Vagina (tissue), 2 donors: ENCODE measurements at regions of chr11 and their contacts with region 1.

Region 1: GRCh38 chr11:61384271-61385242 is 7.8 kb upstream of the TMEM216 start:
- DNase-seq: no peak
- H3K4me3 ChIP-seq: no peak overlapping the region
- H3K27ac ChIP-seq: no peak overlapping the region
- H3K4me1 ChIP-seq: peaks cover 4% of the 10 kb centered on the region
- H3K27me3 ChIP-seq: no peaks in the 10 kb centered on the region
- CTCF ChIP-seq: no peak
- POLR2A ChIP-seq: no peak

Region 2: DNA sequence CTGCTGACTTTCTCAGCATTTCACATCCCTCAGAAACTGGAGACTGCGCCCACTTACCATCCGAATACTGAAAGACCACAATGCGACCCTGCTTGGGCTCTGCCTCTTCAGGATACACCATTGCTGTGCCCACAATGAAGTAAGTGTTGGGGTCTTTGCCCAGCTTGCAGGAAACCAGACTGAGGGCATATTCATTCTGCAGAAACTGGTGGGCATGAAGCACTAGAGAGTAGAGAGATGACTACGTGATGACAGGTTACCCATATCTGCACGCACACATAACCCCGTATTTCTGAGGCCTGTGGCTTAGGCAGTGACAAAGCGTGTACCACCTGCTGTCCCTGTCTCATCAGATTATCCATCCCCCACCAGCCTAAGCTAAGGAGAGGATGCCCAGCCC is 74.8 kb before region 1 on chr11:
- intact Hi-C with region 1: no loop called
- DNase-seq: no peak
- H3K4me3 ChIP-seq: no peak overlapping the region
- H3K27ac ChIP-seq: no peak overlapping the region
- H3K4me1 ChIP-seq: no peaks in the 10 kb centered on the region
- H3K27me3 ChIP-seq: no peaks in the 10 kb centered on the region
- CTCF ChIP-seq: no peak
- POLR2A ChIP-seq: no peak

Region 3: DNA sequence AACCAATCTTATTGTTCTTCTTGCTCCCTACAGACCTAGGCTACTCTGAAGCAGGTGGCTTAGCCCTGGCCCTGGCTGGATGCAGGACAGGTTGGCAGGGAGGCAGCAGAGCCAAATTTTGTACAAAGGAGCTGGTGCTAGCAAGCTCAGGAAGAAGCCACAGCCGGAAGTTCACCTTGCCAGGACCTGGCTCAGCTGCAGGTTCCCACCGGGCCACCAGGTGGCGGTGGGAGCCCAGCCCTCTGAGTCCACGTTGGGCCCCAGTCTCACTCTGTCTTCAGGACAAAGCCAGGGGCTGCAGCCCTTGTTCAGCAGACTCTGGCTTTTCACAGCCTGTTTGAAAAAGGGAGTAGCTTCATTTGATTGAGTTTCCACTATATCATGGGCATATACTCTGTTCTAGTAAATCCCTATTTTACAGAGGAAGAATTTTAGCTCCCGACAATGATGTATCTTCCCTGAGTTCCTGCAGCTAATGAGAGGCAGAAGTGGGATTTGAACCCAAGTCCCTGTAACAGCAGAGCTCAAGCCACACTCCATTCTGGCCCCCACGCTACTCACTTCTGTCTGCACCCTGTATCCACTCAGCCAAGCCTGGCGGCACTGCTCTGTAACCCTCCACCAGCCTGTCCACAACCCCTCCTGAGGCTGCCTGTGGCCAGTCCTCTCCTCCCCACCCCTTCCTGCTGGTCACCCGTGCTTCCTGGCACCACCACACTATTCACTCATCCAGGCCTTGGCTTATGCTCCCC is 48.2 kb before region 1 on chr11:
- intact Hi-C with region 1: loop called (anchors 2 kb)
- DNase-seq: no peak
- H3K4me3 ChIP-seq: no peak overlapping the region
- H3K27ac ChIP-seq: peak overlapping the region; percentile 3
- H3K4me1 ChIP-seq: peaks cover 36% of the 10 kb centered on the region
- H3K27me3 ChIP-seq: no peaks in the 10 kb centered on the region
- CTCF ChIP-seq: peak; percentile 79 to 97 (median 96)
- POLR2A ChIP-seq: no peak